PC-9 (cell line): ENCODE measurements at regions of chr10 and their contacts with region 1.

Region 1: DNA sequence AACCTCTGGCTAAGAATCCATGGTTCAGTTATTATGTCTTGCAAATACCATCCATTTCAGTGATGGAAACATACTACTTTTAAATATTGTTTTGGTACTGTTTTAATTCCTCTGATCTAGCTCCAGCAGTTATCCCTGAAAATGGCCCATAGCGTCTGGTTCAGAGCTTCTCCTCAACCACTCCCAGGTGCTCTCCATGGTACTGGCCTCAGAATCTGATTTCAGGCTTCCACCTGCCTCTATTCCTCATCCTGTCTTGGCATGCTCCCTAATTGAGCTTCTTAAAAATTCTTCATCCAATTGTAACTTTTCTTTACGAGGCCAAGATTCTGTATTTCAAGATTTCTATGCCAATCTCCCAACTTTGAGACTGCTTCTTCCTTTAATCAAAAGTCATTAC is 236.3 kb downstream of the HTR7 start:
- DNase-seq: no peak
- H3K4me3 ChIP-seq: no peak overlapping the region
- H3K27ac ChIP-seq: no peak overlapping the region
- H3K4me1 ChIP-seq: no peaks in the 10 kb centered on the region
- H3K27me3 ChIP-seq: no peaks in the 10 kb centered on the region
- CTCF ChIP-seq: no peak

Region 2: GRCh38 chr10:90602862-90603610 is 18.5 kb before region 1 on chr10:
- CTCF ChIA-PET with region 1: no interaction called
- POLR2A ChIA-PET with region 1: interaction called, 20 read pairs
- intact Hi-C with region 1: no loop called
- DNase-seq: no peak
- H3K4me3 ChIP-seq: no peak overlapping the region
- H3K27ac ChIP-seq: no peak overlapping the region
- H3K4me1 ChIP-seq: no peaks in the 10 kb centered on the region
- H3K27me3 ChIP-seq: no peaks in the 10 kb centered on the region
- CTCF ChIP-seq: no peak